AG04450 (cell line): ENCODE measurements at regions of chr14 and their contacts with region 1.

Region 1: DNA sequence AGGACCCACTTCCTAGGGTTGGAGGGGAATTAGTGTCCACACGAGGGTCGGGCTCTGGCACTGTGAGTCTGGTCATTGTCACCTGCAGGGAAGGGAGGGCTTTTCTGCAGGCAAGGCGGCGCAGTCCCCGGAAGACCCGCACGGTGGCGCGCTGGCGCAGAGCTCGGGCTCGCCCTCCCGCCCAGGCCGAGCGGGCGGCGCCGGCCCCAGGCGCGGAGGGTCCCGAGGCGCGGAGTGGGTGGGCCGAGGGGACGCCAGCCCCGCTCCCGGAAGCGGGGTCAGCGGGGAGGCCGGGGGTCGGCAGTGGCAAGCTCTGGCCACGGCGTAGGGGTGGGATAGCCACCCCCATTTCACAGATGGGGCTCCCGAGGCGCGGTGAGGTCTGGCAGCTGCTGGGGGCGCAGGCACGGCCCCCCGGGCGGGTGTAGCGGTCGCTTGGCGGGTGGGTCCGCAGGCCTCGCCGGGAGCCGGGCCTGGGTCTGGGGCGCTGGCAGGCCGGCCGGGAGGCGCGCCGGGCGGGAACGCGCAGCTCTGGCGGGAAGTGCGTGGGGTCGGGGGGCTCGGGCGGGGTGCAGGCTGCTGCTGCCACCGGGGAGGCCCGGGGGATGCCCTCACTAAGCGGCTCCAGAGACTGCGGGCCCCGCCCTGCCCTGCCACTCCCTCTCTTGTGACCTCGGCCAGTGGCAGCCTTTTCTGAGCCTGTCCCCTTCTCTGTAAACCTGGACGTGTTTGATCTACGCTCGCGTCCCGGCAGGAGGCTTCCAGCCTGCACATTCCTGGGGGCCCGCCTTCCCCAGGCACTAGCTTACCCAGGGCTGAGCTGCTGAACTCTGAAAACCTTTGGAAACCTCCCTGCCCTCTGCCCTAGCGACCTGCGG is 46.1 kb downstream of the CYP46A1 start:
- DNase-seq: no peak
- H3K4me3 ChIP-seq: peak overlapping the region; percentile 60
- H3K27ac ChIP-seq: no peak overlapping the region
- H3K27me3 ChIP-seq: peaks cover 6% of the 10 kb centered on the region
- CTCF ChIP-seq: peak; percentile 75

Region 2: DNA sequence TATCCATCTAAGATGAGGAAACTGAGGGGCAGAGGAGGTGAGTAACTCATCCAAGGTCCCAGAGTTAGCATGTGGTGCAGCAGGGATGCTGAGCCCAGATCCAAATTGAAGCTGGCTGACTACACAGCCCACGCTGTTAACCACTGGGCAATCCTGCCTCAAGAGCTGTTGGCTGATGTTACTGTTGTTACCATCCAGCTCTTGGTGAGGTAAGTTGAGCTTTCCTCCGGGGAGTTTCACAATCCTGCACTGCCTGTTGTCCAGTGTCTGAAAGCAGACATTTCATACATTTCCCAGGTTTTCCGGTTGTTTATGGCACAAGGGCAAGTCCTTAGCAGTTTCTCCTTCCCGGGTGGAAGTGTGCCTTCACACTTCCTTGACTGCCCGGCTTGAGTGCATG is 31.6 kb before region 1 on chr14:
- CTCF ChIA-PET with region 1: no interaction called
- POLR2A ChIA-PET with region 1: no interaction called
- DNase-seq: no peak
- H3K4me3 ChIP-seq: no peak overlapping the region
- H3K27ac ChIP-seq: no peak overlapping the region
- H3K27me3 ChIP-seq: peaks cover 16% of the 10 kb centered on the region
- CTCF ChIP-seq: no peak

Region 3: GRCh38 chr14:99716850-99717681 is 13.2 kb before region 1 on chr14:
- CTCF ChIA-PET with region 1: interaction called, 11 read pairs
- POLR2A ChIA-PET with region 1: no interaction called
- DNase-seq: no peak
- H3K4me3 ChIP-seq: no peak overlapping the region
- H3K27ac ChIP-seq: no peak overlapping the region
- H3K27me3 ChIP-seq: peaks cover 23% of the 10 kb centered on the region
- CTCF ChIP-seq: no peak

Region 4: GRCh38 chr14:99740411-99740810 is 10.2 kb after region 1 on chr14:
- CTCF ChIA-PET with region 1: interaction called, 14 read pairs
- POLR2A ChIA-PET with region 1: no interaction called
- DNase-seq: no peak
- H3K4me3 ChIP-seq: no peak overlapping the region
- H3K27ac ChIP-seq: no peak overlapping the region
- H3K27me3 ChIP-seq: peaks cover 3% of the 10 kb centered on the region
- CTCF ChIP-seq: no peak

Region 5: GRCh38 chr14:99797231-99797630 is 67.0 kb after region 1 on chr14:
- CTCF ChIA-PET with region 1: interaction called, 11 read pairs
- POLR2A ChIA-PET with region 1: interaction called, 5 read pairs
- DNase-seq: no peak
- H3K4me3 ChIP-seq: no peak overlapping the region
- H3K27ac ChIP-seq: no peak overlapping the region
- H3K27me3 ChIP-seq: no peaks in the 10 kb centered on the region
- CTCF ChIP-seq: no peak

Region 6: GRCh38 chr14:99884834-99885648 is 154.8 kb after region 1 on chr14:
- CTCF ChIA-PET with region 1: interaction called, 89 read pairs
- POLR2A ChIA-PET with region 1: interaction called, 3 read pairs
- DNase-seq: peak; percentile 34
- H3K4me3 ChIP-seq: no peak overlapping the region
- H3K27ac ChIP-seq: no peak overlapping the region
- H3K27me3 ChIP-seq: no peaks in the 10 kb centered on the region
- CTCF ChIP-seq: peak; percentile 78